ENCODE measurements at regions of chr3 and their contacts with region 1.

Region 1: DNA sequence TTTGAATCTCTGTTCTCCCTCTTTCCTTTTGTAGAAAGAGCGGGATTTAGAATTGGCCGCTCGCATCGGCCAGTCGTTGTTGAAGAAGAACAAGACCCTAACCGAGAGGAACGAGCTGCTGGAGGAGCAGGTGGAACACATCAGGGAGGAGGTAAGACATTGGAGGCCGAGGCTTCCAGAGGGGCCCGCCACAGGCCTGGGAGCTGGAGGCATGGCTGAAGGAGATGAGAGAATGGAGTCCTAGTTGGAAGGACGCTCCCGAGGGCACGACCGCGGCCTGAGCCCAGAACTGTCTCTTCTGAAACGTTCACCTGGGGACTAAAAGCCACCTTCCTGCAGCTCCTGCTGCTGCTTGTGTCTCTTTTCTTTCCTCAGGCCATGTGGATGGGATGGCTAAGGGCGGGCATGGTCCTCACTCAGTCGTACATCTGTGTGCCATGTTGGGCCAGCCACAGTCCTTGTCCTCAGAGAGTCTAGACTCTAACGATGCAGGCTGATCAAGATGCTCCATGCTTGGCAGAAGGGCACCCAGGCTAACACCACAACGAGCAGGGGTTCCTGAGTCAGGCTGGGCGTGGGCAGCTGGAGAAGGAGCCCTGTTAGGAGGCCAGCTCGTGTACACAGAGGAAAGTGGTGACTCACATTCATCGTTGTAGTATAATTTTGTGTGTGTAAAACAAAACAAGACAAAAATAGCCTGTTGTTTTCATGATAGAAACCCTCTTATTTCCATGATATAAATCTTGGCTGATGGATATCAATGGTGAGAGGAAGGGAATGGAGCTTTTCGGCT is 81.1 kb downstream of the CCK start:
- DNase-seq: no peak
- H3K4me3 ChIP-seq: no peak overlapping the region
- H3K27ac ChIP-seq: no peak overlapping the region
- H3K4me1 ChIP-seq: peaks cover 89% of the 10 kb centered on the region
- H3K27me3 ChIP-seq: no peaks in the 10 kb centered on the region
- CTCF ChIP-seq: no peak

Region 2: GRCh38 chr3:42118762-42119361 is 66.0 kb before region 1 on chr3:
- intact Hi-C with region 1: loop called (anchors 5 kb)
- DNase-seq: no peak
- H3K4me3 ChIP-seq: no peak overlapping the region
- H3K27ac ChIP-seq: peak overlapping the region; percentile 61
- H3K4me1 ChIP-seq: peaks cover 98% of the 10 kb centered on the region
- H3K27me3 ChIP-seq: no peaks in the 10 kb centered on the region
- CTCF ChIP-seq: peak; percentile 53